Activated B cell treated with CpG ODN at 0.5 μM for 24 hours (primary cell): ENCODE measurements at regions of chr19 and their contacts with region 1.

Region 1: DNA sequence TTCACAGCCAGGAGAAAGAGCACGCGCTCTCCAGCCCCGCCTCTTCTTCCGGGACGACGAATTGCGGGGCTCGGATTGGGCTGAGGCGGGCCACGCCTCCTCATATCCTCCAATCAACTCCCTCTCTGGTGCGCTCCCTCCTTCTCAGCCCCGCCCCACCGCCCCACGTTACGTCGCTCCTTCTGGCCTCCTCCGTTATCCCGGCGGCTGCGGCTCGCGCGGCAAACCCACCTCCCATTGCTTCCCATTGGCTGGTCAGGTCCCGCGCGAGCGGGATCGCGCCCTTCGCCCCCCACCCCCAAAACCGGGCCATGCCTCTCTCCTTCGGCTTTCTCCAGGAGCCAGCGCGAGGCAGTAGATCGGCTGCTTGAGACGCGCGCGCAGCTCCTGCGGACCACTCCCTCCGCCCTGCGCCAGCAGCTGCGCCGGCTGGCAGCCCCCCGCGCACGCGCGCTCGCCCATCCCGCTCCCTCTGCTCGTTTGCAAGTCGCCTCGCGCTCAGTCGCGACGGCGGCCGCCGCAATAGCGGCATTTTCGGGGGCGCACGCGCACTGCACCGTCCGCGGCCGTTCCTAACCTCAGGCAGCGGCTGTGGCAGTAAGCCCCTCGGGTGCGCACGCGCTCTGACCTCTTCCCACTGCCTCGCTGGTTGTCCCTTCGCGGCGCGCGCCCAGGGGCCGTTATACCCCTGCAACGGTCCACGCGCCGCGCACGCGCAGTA is 512 bp upstream of the ARHGAP35 start:
- DNase-seq: peak; percentile 87
- ATAC-seq: peak; percentile 79
- H3K4me3 Mint-ChIP-seq: peak overlapping the region; percentile 92
- H3K27ac Mint-ChIP-seq: peak overlapping the region; percentile 92
- H3K4me1 Mint-ChIP-seq: peaks cover 26% of the 10 kb centered on the region
- H3K27me3 Mint-ChIP-seq: no peaks in the 10 kb centered on the region
- CTCF ChIP-seq: no peak

Region 2: DNA sequence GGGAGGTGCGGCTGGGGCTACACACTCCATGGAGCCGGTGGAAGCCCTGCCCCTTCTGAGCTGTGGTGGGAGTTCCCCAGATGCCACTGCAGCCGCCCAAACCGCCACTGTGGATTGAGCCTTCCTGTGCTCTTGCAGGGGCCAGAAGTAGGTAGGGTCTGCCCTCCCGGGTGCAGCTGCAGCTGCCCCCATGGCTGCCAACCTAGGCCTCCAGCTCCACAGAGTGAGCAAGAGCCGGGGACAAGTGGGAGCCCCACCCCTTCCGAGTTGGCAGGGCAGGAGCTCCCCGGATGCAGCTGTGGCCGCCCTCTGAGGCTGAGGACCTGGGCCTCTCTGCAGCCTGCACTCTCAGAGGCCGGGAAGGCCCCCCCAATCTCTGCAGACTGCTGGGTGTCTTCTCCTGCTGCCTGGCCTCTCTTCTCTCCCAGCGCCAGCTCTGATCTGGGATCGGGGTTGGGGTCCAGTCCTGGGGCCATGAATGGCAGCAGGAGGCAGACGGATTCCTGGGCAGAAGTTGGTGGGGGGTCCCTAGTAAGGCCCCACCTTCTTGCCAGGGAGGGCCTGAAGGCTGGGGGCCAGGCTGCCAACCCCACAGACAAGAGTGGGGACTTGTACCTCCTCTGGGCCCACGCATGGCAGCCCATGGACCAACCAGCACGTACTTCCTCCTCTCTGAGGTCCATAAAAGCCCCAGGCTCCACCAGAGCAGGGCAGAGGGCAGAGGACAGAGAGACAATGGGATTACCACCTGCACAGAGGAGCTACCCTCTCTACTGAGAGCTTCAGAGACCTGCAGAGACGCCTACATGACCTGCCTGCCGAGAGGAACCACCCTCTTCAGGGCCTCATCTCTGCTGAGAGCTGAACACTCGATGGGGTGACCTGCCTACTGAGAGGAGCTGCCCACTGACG is 38.5 kb before region 1 on chr19:
- CTCF ChIA-PET with region 1: no interaction called
- POLR2A ChIA-PET with region 1: interaction called, 11 read pairs
- intact Hi-C with region 1: no loop called
- DNase-seq: peak; percentile 54
- ATAC-seq: peak; percentile 71
- H3K4me3 Mint-ChIP-seq: peak overlapping the region; percentile 48
- H3K27ac Mint-ChIP-seq: peak overlapping the region; percentile 90
- H3K4me1 Mint-ChIP-seq: peaks cover 61% of the 10 kb centered on the region
- H3K27me3 Mint-ChIP-seq: no peaks in the 10 kb centered on the region
- CTCF ChIP-seq: no peak

Region 3: DNA sequence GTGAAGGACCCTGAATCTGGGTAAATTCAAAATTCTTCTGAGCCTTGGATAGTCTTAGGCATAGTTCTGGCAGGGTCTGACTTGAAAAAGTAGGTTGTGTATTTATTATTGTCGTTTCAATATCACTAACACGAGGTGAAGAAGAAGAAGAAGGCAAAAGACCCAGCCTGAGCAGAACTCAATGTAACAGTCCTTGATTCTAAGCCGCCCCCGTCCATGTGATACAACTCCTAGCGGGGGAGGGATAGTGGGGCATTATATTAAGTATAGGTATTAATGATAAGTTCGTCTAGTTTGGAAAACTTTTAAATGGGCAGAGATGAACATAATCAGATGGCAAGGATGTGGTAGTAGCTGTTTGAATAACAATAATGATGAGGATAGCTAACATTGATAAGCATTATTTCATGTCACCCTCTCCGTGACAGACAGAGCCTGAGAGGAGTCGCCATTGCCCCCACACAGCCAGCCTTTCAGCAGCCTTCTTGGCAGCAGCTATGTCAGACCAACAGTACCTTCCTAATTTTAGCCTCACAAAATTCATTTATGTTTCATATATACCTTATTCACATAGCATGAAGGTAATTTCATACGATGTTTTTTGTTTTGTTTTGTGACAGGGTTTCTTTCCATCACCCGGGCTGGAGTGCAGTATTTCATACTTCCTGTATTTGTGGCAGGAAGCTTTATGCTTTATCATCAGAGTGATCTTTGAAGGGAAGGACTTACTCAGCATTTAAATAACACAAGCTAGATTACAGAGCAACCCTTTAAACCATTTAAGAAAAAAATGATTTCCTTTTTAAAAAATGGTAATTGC is 94.9 kb after region 1 on chr19:
- CTCF ChIA-PET with region 1: no interaction called
- POLR2A ChIA-PET with region 1: no interaction called
- intact Hi-C with region 1: loop called (anchors 1 kb)
- DNase-seq: no peak
- ATAC-seq: peak; percentile 61
- H3K4me3 Mint-ChIP-seq: peak overlapping the region; percentile 73
- H3K27ac Mint-ChIP-seq: peak overlapping the region; percentile 67
- H3K4me1 Mint-ChIP-seq: peaks cover 28% of the 10 kb centered on the region
- H3K27me3 Mint-ChIP-seq: no peaks in the 10 kb centered on the region
- CTCF ChIP-seq: no peak

Region 4: DNA sequence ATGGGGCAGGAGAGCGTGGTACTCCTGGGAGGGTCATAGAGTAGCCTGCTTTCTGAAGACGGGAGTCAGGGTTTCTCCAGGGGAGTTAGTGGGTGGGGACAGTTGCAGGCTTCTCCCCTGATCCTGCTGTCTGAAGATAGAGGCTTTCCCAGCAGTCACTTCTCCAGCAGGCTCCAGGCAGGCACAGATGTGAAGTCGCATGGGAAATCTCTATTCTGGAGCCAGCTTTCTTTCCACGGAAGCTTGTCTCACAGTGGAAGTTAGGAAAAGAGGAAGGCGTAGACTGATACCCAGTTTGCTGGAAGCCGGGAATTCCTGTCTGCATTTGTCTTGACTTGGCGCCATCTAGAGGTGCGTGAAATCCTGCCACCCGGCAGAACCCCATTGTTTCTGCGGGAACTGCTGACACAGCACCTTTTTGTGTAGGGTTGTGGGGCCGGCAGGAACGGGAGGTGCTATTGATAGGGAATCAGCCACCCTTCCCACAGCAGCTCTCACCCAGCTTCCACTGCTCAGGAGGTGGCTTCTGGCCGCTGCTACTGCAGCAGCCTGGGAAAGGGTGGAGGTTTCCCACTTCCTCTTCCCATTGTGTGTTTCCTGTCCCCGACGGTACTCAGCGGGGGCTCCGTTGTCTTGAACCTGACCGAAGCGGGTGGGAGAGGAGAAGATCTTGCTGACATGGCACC is 130.8 kb after region 1 on chr19:
- CTCF ChIA-PET with region 1: interaction called, 13 read pairs
- POLR2A ChIA-PET with region 1: interaction called, 3 read pairs
- intact Hi-C with region 1: loop called (anchors 1 kb)
- DNase-seq: no peak
- ATAC-seq: peak; percentile 64
- H3K4me3 Mint-ChIP-seq: no peak overlapping the region
- H3K27ac Mint-ChIP-seq: no peak overlapping the region
- H3K4me1 Mint-ChIP-seq: peaks cover 10% of the 10 kb centered on the region
- H3K27me3 Mint-ChIP-seq: no peaks in the 10 kb centered on the region
- CTCF ChIP-seq: no peak

Region 5: GRCh38 chr19:47013041-47013517 is 152.8 kb after region 1 on chr19:
- CTCF ChIA-PET with region 1: interaction called, 20 read pairs
- POLR2A ChIA-PET with region 1: interaction called, 4 read pairs
- intact Hi-C with region 1: loop called (anchors 5 kb)
- DNase-seq: peak; percentile 69
- ATAC-seq: peak; percentile 82
- H3K4me3 Mint-ChIP-seq: no peak overlapping the region
- H3K27ac Mint-ChIP-seq: no peak overlapping the region
- H3K4me1 Mint-ChIP-seq: peaks cover 8% of the 10 kb centered on the region
- H3K27me3 Mint-ChIP-seq: peaks cover 7% of the 10 kb centered on the region
- CTCF ChIP-seq: peak; percentile 99